Pancreas (tissue), 10 donors: ENCODE measurements at regions of chr12 and their contacts with region 1.

Region 1: GRCh38 chr12:751192-751998 is 984 bp upstream of the WNK1 start:
- DNase-seq: peak; percentile 76 to 90 (median 84)
- ATAC-seq: peak; percentile 46 to 75 (median 62)
- H3K4me3 ChIP-seq: peak overlapping the region in 3 of 4 donors; percentile 75 to 86 (median 79)
- H3K27ac ChIP-seq: peak overlapping the region; percentile 27 to 97 (median 68)
- H3K4me1 ChIP-seq: peaks cover 0 to 16% (median 14%) of the 10 kb centered on the region in 3 donors
- H3K27me3 ChIP-seq: no peaks in the 10 kb centered on the region
- CTCF ChIP-seq: peak in 3 of 4 donors; percentile 31 to 49 (median 34)

Region 2: DNA sequence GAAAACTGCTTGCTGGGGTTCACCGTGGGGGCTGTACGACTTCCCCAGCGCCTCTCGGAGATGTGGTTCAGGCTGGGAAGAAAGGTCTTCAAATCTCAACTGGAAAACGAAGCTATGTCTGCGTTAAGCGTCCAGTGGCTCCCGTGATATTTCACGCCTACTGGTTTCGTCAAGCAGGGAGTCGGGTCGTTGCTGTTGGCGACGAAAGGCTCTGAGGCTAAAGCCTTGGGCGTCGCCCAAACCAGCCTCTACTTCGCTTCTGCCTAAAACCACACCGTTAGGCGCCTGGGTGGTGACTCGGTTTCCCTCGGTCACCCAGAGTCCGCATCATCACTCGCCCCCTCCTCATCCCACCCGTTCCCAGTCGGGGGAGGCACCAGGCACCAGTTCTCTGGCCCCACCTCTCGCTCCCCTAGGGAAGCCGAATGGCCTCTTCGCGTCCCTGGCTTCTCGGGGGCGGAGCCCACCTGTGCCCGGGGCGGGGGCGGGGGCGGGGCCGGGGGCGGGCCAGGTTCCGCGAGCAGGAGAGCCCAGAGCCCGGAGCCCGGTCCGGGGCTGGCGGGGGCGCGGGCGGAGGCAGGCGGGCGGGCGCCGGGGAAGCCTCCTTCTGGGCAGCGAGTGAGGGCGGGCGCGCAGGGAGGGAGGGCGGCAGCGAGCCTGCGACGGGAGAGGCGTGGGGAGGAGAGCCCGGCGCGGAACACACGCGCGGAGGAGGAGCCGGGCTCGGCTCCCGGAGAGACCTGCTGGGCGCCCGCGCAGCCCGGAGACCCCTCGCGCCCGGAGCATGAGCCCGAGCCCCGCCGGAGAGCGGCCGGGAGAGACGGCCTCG is 291.8 kb before region 1 on chr12 and contains the start of gene B4GALNT3:
- intact Hi-C with region 1: no loop called
- DNase-seq: peak; percentile 62 to 87 (median 74)
- ATAC-seq: peak; percentile 89 to 91 (median 90)
- H3K4me3 ChIP-seq: peak within 1 kb of the TSS; percentile 35 to 68 (median 58)
- H3K27ac ChIP-seq: peak within 1 kb of the TSS in 1 of 4 donors; percentile 53
- H3K4me1 ChIP-seq: peaks cover 0 to 4% (median 0%) of the 10 kb centered on the region in 3 donors
- H3K27me3 ChIP-seq: no peaks in the 10 kb centered on the region
- CTCF ChIP-seq: no peak
- total RNA-seq, gene B4GALNT3: 3.8 to 19.5 (median 6.0) TPM

Region 3: GRCh38 chr12:530308-530707 is 221.1 kb before region 1 on chr12:
- intact Hi-C with region 1: no loop called
- DNase-seq: no peak
- ATAC-seq: peak in 2 of 4 donors; percentile 41 to 57
- H3K4me3 ChIP-seq: no peak overlapping the region
- H3K27ac ChIP-seq: no peak overlapping the region
- H3K4me1 ChIP-seq: no peaks in the 10 kb centered on the region
- H3K27me3 ChIP-seq: no peaks in the 10 kb centered on the region
- CTCF ChIP-seq: no peak

Region 4: DNA sequence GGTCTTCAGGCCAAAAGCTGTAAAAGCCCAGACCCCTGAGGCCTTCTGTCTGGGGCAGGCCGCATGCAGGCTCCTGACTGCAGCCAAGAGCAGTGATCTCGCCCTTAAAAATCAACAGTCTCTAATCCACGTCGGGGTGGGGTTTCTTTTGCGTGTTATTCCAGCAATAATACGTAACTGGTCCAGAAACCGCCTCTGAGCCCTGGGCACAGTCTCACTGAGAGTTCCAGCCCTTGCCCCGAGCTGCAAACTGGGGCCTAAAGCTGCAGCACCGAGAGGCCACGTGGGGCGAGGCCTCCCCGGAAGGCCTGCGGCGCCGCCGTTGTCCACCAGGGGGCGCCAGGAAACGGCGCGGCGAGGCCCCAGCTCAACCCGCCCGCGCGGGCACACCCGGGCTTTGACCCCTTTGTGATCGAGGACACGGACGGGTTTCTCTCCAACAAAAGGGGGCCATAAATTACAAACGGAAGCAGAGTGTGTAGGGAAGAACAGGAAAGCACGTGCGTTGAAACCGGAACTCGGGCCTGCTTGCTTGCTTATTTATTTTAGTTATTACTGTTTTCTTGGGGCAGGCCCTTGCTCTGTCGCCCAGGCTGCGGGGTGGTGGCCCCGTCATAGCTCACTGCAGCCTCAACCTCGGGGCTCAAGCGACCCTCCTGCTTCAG is 175.3 kb before region 1 on chr12:
- intact Hi-C with region 1: loop called in 1 of 3 experiments (anchors 5 kb)
- DNase-seq: peak; percentile 54 to 98 (median 80)
- ATAC-seq: peak; percentile 89 to 95 (median 94)
- H3K4me3 ChIP-seq: peak overlapping the region in 1 of 4 donors; percentile 8
- H3K27ac ChIP-seq: no peak overlapping the region
- H3K4me1 ChIP-seq: peaks cover 0 to 3% (median 0%) of the 10 kb centered on the region in 3 donors
- H3K27me3 ChIP-seq: no peaks in the 10 kb centered on the region
- CTCF ChIP-seq: peak; percentile 99 to 100 (median 100)